Cardiac septum (tissue), 1 donor: ENCODE measurements at regions of chr6 and their contacts with region 1.

Region 1: DNA sequence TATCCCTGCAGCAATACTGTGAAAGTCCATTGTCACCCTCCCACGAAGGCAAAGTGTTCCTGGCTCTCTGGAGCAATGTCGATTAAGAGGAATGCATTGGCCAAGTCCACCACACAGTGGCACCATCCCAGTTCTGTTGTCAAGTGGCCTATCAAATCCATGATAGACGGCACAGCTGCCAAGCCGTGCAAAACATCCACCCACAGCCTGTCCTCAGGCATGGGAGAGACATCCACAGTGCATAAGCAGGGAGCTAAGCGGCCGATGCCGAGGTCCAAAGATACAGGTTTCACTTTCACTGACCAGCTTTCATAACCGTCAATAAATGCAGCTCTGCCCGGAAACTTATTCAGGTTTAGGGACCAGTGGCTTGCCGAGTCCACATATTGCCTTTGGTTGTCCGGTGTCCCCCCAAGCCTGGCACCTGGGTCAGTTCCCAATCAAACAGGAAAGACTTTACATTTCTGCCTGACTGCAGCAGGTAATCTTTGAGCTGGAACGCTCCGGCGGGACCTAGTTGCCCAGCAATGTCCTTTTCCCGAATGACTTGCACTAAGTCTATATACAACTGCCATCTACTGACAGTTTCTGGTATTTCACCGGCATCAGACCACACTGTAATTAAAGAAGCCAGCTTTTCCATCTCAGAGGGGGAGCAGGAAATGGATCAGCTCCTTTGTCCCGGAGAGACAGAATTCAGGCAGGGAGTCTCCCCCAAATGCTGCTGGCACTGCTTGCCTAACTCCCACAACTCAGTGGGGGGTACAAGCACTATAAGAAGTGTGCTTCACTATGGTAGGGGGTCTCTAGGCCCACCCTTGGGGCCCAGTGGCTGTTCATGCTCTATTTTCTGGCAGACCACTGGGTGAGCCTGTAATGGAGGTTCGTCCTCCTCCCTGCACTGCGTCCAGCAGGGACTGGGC is 6.3 kb downstream of the ZKSCAN3 start:
- DNase-seq: peak; percentile 89

Region 2: DNA sequence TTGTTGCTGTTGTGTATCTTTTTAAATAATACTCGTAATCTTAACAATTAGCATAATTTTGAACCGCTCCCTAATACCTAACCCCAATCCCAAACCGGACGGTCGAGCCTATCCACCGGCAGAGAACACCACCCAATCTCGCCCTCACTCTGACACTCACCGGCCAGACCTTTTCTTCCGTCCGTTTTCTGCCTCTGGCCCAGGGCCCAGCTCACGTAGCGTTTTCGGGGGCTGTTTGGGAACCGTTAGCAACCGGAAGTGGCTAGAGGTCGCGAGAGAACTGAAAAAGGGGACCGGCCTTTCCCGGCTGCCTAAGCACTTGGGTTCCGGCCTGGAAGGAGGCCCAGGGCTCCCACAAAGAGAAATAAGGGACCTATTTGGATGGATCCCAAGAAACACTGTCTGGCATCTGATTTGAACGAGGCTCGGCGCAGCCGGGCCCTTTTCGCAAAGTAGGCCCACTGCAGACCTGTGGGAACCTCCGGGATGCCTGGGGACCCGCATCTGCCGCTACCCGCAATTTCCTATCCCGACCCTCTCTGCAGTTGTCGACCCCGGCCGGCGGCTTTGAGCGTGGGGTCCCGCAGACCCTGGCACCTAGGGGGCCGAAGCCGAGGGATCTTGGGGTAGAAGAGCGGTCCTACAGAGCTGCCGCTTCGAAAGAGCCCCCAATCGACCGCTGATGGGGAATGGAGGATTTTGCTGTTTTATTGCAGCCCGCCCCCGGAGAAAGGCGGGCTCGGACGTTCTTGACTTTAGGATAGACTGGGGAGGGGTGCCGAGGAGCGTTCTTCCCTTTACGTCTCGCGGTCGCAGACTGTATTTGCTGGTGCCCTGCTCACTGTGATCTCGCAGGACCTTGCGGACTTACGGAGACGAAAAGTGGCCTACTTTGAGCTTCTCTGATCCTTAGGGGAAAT is 219.2 kb before region 1 on chr6:
- intact Hi-C with region 1: loop called (anchors 5 kb)
- DNase-seq: peak; percentile 92

Region 3: GRCh38 chr6:28225056-28225834 is 130.8 kb before region 1 on chr6 and contains the start of gene ZSCAN9:
- intact Hi-C with region 1: loop called (anchors 10 kb)
- DNase-seq: peak; percentile 92
- total RNA-seq, gene ZSCAN9: 8.4 TPM